Activated T-helper 2 cell treated with anti-CD3 and anti-CD28 coated beads, Interferon-gamma antibody, Interleukin-2, Interleukin-4, amounts not matched to agents 10 μg/mL and 5 μg/mL and 100 μg/mL, durations not matched to agents 14 hours and 24 hours and 36 hours (primary cell): ENCODE measurements at regions of chr6 and their contacts with region 1.

Region 1: DNA sequence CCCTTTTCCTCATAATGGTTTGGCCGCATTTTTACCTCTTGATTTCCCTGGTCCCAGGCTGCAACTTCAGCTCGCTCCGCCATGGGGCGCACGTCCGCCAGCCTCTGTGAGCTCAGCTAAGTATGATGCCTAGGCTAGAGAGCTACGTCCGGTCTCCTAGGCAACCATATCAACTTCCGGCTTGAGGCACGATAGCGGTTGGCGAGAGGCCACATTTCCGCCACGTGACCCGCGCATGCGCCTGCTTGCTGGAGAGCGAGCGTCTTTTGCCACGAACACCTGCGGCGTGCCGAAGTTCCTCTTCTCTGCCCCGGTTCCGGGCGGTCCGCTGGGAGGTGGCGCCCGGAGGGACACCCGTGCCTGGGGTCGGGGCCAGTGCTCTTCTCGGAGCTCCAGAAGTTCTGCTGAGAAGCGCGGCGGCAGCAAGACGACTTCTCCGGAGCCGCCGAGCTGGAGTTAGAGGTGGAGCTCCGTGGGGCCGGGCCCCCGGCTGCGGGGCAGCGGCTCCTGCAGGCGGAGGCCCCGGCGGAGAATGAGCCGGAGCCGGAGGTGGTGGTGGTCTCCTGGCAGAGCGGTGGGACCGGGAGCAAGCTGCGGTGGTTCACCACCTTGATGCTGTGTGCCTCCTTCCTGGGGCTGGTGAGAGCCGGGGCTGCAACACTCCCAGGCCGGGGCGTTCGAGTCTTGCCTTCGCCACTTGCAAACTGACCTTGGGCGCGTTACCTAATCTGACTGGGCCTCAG is 172.0 kb downstream of the SLC16A10 start:
- DNase-seq: peak; percentile 99
- H3K4me3 Mint-ChIP-seq: peak overlapping the region; percentile 78
- H3K27ac Mint-ChIP-seq: peak overlapping the region; percentile 63
- H3K4me1 Mint-ChIP-seq: peaks cover 27% of the 10 kb centered on the region
- H3K27me3 Mint-ChIP-seq: peaks cover 12% of the 10 kb centered on the region

Region 2: DNA sequence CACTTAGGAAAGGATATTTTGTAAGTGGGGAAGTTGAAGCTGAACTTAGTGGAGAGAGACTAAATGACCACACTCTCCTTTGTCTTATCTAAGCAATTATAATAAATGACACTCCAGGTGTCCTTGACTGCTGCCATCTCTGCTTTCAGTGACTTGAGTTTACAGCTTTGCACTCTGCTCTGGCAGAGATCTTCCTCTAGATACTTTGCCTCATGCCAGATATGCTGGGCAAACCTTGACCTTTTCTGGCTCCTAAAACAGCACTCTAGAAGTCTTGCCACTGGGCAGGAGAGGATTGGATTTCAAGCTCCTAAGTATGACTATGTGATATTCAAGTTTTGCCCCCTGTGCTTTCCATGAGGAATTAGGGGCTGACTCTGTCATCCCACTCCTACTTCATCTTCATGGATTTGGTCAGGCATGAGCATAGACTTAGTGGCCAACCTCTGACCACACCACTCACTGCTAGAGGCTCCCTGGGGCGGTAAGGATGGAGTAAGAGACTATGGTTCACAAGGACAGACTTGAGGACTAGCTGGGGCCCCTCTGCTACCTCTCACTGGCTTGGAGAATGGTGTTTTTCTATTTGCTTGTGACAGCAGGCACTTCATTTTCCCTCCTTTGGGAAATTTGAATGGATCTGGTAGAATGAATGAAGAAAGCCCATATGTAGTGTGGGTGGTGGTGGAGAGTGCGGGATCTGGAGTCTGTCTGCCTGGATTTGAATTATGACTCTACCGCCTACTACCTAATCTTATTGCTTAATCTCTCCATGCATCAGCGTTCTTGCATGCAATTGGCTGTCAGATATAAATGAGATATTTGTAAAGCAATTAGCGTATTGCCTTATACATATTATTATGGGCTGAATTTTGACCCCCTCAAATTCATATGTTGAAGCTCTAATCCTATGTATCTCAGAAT is 32.3 kb after region 1 on chr6:
- intact Hi-C with region 1: loop called (anchors 1 kb)
- DNase-seq: no peak
- H3K4me3 Mint-ChIP-seq: no peak overlapping the region
- H3K27ac Mint-ChIP-seq: peak overlapping the region; percentile 38
- H3K4me1 Mint-ChIP-seq: peaks cover 31% of the 10 kb centered on the region
- H3K27me3 Mint-ChIP-seq: no peaks in the 10 kb centered on the region

Region 3: DNA sequence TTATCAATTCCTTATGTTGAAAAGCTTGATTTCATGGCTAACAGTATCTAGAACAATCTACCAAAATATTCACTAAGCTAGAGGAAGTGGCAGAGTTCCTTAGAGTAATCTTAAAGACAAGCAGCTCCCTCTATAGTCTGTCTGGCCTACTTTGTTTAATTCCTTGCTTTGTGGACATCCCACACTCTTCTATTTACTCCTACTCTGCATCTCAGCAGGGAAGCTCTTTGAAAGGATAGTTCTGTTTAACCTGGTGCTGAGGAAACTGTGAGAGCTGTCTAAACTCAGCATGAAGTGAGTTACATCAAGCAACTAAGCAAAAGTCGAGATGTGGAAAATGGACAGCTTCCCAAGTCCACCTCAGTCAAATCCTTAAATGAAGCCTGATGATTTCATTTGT is 219.5 kb after region 1 on chr6:
- intact Hi-C with region 1: loop called (anchors 1 kb)
- DNase-seq: no peak
- H3K4me3 Mint-ChIP-seq: no peak overlapping the region
- H3K27ac Mint-ChIP-seq: no peak overlapping the region
- H3K4me1 Mint-ChIP-seq: peaks cover 42% of the 10 kb centered on the region
- H3K27me3 Mint-ChIP-seq: no peaks in the 10 kb centered on the region

Region 4: DNA sequence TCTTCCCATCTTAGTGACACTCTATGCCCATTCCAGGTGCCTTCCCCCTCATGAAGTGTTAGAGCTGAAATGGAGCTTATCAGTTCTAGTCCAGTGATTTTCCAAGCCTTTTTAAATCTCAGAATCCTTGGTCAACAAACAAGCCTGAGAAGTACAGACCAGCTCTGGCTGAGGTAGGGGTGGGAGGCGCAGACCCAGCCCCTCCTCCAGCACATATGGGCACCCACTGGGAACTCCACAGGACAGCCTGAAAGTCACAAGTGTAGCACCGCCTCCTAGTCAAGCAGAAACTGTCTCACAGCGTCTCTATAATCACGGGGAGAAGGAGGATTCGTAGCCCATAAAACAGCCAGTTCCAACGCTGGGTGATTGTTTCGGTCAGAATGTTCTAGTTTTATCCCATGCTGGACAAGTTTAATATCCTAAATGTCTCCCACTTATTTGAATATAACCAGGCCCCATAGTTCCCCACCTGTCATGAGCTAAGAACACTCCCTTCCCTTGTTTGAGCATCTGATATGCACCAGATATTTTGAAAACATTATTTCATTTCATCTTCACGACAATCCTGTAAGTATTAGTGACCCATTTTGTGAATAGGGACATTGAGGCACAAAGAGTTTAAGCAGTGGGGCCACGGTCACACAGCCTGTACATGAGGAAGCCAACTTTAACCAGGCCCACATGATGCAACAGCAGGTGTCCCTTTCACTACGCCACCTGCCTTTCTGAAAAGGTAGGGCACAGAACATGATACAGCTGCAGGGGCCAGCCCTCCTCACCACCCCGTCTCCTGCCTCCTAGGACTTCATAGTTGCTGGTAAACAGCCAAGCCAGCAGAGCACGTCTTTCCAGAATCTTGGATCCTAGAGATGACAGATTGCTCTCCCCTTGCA is 306.3 kb after region 1 on chr6:
- intact Hi-C with region 1: loop called (anchors 2 kb)
- DNase-seq: no peak
- H3K4me3 Mint-ChIP-seq: no peak overlapping the region
- H3K27ac Mint-ChIP-seq: peak overlapping the region; percentile 53
- H3K4me1 Mint-ChIP-seq: peaks cover 70% of the 10 kb centered on the region
- H3K27me3 Mint-ChIP-seq: no peaks in the 10 kb centered on the region

Region 5: GRCh38 chr6:111642463-111643158 is 383.4 kb after region 1 on chr6:
- intact Hi-C with region 1: loop called (anchors 1 kb)
- DNase-seq: peak; percentile 29
- H3K4me3 Mint-ChIP-seq: no peak overlapping the region
- H3K27ac Mint-ChIP-seq: no peak overlapping the region
- H3K4me1 Mint-ChIP-seq: peaks cover 4% of the 10 kb centered on the region
- H3K27me3 Mint-ChIP-seq: peaks cover under 1% of the 10 kb centered on the region

Region 6: DNA sequence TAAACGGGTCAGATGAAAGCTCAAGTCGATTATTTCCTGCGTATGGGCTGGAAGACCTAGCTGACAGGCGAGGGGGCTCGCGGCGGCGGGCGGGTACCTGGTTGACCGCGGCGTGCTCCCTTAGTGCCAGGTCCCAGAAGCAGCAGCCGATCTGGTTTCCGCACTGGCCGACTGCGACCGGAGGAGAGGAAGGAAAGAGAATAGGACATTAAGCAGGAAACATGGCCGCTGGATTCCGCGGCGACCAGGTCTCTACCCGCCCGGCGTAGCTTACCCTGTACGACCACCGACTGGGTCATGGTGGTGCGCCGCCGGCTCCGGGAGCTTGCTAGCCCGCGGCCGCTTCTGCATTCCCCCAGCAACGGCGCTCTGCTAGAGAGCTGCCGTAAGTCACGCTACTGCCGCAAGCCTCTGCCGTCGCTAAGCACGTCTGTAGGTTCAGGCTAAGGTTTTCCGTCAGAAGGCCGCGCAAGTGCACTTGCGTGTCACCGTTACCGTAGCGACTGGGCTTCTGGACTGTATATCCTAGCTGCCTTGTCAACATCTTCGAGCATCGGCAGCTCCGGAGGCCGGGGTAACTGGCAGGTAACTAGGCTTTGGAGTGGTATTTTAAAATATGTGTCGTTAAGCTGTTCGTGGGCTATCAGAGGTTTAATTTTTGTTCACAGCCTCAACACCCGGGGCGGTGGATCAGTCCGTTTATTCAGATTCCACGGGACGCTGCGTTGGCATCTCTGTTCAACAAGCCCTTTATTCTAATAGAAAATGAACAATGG is 828.1 kb after region 1 on chr6 and contains the starts of genes FAM229B and TUBE1:
- intact Hi-C with region 1: loop called (anchors 1 kb)
- DNase-seq: peak; percentile 87
- H3K4me3 Mint-ChIP-seq: no peak within 1 kb of the TSS
- H3K27ac Mint-ChIP-seq: no peak within 1 kb of the TSS
- H3K4me1 Mint-ChIP-seq: peaks cover 8% of the 10 kb centered on the region
- H3K27me3 Mint-ChIP-seq: peaks cover 24% of the 10 kb centered on the region
- total RNA-seq, gene FAM229B: 1.1 and 3.1 TPM in 2 replicates
- total RNA-seq, gene TUBE1: 21.0 and 24.3 TPM in 2 replicates